ENCODE measurements at regions of chr15 and their contacts with region 1.

Region 1: DNA sequence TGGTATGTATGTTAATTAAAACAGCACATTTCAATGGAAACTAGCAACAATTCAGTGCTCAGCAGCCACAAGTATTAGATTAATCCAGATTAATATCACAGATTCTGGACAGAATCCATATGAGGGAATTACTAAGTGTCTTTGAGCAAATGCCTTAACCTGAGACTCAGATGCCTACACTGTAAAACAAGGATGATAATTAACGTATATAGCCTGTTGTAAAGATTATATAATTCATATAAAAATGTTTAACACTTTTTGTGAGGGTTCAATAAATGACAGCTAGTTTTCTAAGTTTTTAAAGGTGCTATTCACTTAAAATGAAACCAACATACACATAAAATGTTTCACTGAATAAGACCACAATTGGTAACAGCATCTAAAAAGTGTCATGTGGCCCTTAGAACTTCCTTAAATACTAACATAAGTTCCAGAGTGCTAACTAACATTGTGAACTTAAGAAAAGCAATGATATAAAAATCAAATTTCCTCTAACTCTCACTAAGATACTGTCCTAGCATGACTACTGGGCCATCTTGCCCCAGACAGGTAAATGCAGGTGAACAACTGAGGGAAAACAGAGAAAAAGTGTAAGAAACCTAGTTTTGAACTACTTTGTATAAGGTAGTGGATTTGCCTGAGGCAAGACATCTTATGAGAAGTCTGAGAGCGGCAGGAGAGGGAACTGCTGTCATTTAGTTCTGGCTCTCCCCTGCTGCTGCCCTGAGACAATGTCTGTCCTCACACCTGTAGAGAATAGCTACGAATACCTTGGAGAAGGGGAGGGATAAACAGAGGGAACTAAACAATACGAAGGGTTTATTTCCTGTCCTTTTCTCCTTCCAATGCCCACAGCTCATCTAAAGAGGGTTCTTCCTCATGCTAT is 151.3 kb downstream of the ADAM10 start:
- DNase-seq: no peak
- ATAC-seq: peak; percentile 93

Region 2: DNA sequence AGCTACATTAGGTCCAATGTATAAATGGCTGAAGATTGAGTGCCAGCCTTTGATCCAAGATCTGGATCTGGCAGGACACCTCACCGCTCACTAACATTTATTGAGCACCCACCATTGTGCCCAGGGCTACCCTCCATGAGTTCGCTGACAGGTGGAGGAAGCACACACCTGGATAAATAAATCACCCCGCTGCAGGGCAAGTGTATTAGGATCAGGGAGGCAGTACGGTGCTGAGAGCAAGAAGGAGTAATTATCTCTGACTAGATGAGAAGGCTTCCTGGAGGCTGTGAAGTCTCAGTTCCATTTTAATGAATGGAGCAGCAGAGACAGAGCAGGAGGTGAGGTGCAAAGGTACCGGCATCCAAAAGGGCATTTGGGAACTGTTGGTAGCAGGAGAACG is 62.3 kb before region 1 on chr15:
- intact Hi-C with region 1: loop called in 1 of 2 experiments (anchors 10 kb)
- DNase-seq: no peak
- ATAC-seq: peak; percentile 27